Right ventricle myocardium inferior (tissue), 1 donor: ENCODE measurements at regions of chr2 and their contacts with region 1.

Region 1: GRCh38 chr2:52810460-52810859 is 957.1 kb upstream of the CHAC2 start:
- DNase-seq: no peak
- ATAC-seq: peak; percentile 65

Region 2: GRCh38 chr2:53202063-53202462 is 391.6 kb after region 1 on chr2:
- intact Hi-C with region 1: loop called (anchors 5 kb)
- DNase-seq: no peak
- ATAC-seq: peak; percentile 90

Region 3: GRCh38 chr2:53724536-53724935 is 914.1 kb after region 1 on chr2:
- intact Hi-C with region 1: loop called (anchors 10 kb)
- DNase-seq: no peak
- ATAC-seq: no peak